H1 (cell line): ENCODE measurements at regions of chr22 and their contacts with region 1.

Region 1: GRCh38 chr22:30574997-30575671 is 669 bp upstream of the GAL3ST1 start:
- DNase-seq: no peak
- H3K4me3 ChIP-seq: peak overlapping the region; percentile 40 to 70 (median 43); a peak in 7 of 8 replicates
- H3K27ac ChIP-seq: no peak overlapping the region
- H3K4me1 ChIP-seq: peaks cover 0 to 15% (median 5%) of the 10 kb centered on the region in 4 experiments; a peak in 5 of 7 replicates
- H3K27me3 ChIP-seq: no peaks in the 10 kb centered on the region
- CTCF ChIP-seq: peak in 1 of 3 experiments; percentile 39; a peak in 1 of 4 replicates
- EP300 ChIP-seq: no peak
- POLR2A ChIP-seq: 0 out of 3 replicates have a peak, but pooled peaks of 1 of the 2 experiments have one; percentile 2
- RAD21 ChIP-seq: no peak

Region 2: DNA sequence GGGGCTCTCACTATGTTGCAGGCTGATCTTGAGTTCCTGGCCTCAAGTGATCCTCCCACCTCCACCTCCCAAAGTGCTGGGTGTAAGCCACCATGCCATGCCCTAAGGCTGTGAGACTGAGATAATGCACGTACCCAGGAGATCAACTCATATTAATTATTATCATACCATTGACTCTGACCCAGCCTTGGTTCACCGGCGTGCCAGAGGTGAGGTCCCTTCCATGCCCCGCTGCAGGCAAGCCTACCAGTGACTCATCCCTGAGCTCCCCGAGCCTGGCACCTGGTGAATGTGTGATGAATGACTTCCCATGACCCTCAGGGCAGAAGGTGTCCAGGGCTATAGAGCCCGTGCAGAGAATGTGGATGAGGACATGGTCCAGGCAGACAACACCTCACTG is 12.8 kb before region 1 on chr22:
- CTCF ChIA-PET with region 1: interaction called, 10 read pairs
- POLR2A ChIA-PET with region 1: interaction called, 11 read pairs
- DNase-seq: no peak
- H3K4me3 ChIP-seq: no peak overlapping the region
- H3K27ac ChIP-seq: no peak overlapping the region
- H3K4me1 ChIP-seq: peaks cover 0 to 22% (median 12%) of the 10 kb centered on the region in 4 experiments; a peak in 6 of 7 replicates
- H3K27me3 ChIP-seq: no peaks in the 10 kb centered on the region
- CTCF ChIP-seq: no peak
- EP300 ChIP-seq: no peak
- POLR2A ChIP-seq: no peak
- RAD21 ChIP-seq: no peak

Region 3: GRCh38 chr22:30591588-30592359 is 16.6 kb after region 1 on chr22 and contains the start of gene PES1:
- CTCF ChIA-PET with region 1: interaction called, 4 read pairs
- POLR2A ChIA-PET with region 1: interaction called, 64 read pairs
- DNase-seq: peak; percentile 92 to 95
- H3K4me3 ChIP-seq: peak within 1 kb of the TSS; percentile 68 to 100 (median 94)
- H3K27ac ChIP-seq: peak within 1 kb of the TSS; percentile 94
- H3K4me1 ChIP-seq: peaks cover 0 to 8% (median 1%) of the 10 kb centered on the region in 4 experiments; a peak in 2 of 7 replicates
- H3K27me3 ChIP-seq: no peaks in the 10 kb centered on the region; a peak in 2 of 7 replicates
- CTCF ChIP-seq: no peak
- EP300 ChIP-seq: no peak
- POLR2A ChIP-seq: peak; percentile 55 to 71; a peak in 2 of 3 replicates
- RAD21 ChIP-seq: no peak
- total RNA-seq, gene PES1: 121 and 133 TPM in 2 replicates